ENCODE measurements at regions of chr12 and their contacts with region 1.

Region 1: DNA sequence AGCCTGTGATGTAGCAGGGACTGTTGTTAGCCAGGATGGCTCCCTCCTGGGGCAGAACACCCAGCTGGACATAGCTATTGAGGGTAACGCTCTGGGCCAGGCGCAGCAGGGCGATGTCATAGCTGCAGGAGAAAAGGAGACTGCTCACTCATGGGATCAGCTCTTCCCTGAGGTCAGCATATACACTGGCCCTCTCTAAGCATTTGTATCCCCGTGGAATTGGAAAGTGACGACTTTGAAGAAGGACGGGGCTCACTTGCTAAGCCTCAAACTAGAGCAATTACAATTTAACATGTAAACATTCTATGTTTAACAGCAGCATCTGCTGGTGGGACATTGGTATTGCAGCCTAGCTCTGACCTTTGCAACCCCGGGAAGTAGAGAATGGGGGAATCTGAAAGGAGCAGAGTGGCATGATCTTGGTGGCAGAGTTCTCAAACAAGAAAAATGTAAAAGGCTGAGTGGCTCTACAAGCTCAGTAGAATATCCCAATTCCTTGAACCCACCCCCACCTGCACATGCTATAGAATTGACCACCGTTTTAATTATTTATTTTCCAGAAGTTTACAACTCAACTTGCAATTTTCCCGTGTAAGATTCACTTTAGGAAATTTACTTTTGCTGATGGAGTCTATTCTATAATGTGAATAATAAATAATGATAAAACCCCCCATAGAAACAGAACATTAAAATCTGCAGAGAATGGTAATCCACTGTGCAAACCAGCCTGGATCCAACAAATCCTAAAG is 5.0 kb downstream of the CELA1 start:
- DNase-seq: no peak

Region 2: DNA sequence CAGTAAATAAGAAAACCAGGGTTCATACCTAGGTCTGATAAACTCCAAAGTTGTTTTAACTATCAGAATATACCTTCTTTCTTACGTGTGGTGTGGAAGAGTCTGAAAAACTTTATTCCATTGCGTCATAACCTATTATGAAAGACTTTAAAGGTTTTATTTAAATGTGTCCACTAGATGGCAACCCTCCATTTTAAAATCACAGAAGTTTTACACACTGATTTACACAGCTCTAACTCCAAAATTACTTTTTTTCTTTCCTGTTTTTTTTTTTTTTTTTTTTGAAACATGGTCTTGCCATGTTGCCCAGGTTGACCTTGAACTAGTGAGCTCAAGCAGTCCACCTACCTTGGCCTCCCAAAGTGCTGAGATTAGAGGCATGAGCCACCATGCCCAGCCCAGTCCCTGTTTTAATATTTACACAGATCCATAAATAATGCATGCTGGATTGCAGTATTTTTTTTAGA is 516.0 kb before region 1 on chr12:
- intact Hi-C with region 1: loop called (anchors 2 kb)
- DNase-seq: no peak

Region 3: DNA sequence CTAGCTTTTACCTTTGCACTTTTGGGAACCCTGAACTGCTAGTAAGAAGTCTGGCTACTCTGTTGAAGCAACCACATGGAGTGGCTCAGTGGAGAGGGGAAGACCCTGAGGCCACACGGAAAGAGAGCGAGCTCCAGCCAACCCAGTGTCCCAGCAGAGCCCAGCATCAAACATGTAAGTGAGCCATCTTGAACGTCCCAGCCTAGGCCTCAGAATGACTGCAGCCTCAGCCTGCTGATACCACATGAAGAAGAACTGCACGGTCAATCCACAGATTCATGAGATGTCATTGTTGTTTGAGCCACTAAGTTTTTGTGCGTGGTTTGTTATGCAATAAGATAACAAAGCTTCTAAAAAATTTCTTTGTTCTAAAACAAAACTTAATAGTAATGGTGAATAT is 208.7 kb before region 1 on chr12:
- intact Hi-C with region 1: no loop called
- DNase-seq: no peak

Region 4: DNA sequence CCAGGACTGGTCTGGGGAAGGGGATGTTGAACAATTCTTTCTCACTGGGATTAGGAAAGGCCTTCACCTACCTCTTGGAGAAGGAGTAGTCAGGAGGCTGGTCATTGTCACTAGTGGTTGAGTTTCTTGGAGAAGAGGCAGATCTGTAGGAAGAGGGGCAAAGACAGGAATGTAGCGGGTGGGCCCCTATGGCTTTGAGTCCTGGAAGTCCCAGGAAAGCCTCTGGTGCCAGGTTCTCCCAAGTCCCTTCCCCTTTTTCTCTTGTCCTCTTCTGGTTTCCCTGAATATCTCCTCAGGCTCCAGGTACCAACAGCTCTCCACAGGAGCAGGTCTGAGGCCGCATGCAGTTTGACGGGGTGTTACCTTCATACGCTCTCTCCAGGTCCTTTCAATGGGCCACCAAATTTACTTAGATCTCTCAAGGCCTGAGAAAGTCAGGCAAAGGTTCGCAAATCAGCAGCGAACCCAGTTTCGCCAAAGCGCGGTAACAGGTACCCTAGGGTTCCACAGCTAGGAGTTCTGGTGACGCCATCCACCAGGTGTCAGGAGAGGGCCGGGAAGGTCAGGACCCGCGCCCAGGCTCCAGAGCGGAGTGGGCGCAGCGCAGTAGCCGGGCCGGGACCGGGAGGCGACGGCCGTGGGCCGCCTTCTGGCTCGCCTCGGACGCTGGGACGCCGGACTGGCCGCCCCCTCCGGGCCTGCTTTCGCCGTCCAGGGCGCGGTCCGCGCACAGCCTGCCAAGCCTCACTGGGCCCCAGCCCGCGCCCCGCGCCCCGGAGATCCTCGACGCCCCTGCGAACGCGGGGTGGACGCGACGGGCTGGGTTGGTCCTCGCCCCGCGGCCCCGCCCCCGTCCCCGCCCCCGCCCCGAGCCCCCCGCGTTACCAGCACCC is 72.0 kb before region 1 on chr12:
- intact Hi-C with region 1: loop called (anchors 5 kb)
- DNase-seq: peak; percentile 78

Region 5: GRCh38 chr12:51293696-51294095 is 47.7 kb before region 1 on chr12:
- intact Hi-C with region 1: no loop called
- DNase-seq: no peak

Measured in cardiac septum (tissue), 1 donor.